ENCODE measurements at regions of chr4 and their contacts with region 1.

Region 1: GRCh38 chr4:108118490-108118889 is 50.2 kb downstream of the LEF1 start:
- DNase-seq: peak; percentile 20
- H3K4me3 ChIP-seq: no peak overlapping the region
- H3K27ac ChIP-seq: peak overlapping the region; percentile 0
- H3K4me1 ChIP-seq: peaks cover 77% of the 10 kb centered on the region
- CTCF ChIP-seq: no peak

Region 2: GRCh38 chr4:107606700-107607099 is 511.8 kb before region 1 on chr4:
- CTCF ChIA-PET with region 1: no interaction called
- POLR2A ChIA-PET with region 1: no interaction called
- intact Hi-C with region 1: no loop called
- DNase-seq: no peak
- H3K4me3 ChIP-seq: no peak overlapping the region
- H3K27ac ChIP-seq: no peak overlapping the region
- H3K4me1 ChIP-seq: no peaks in the 10 kb centered on the region
- CTCF ChIP-seq: no peak

Region 3: GRCh38 chr4:107699466-107700206 is 418.9 kb before region 1 on chr4:
- CTCF ChIA-PET with region 1: no interaction called
- POLR2A ChIA-PET with region 1: no interaction called
- intact Hi-C with region 1: no loop called
- DNase-seq: no peak
- H3K4me3 ChIP-seq: no peak overlapping the region
- H3K27ac ChIP-seq: no peak overlapping the region
- H3K4me1 ChIP-seq: no peaks in the 10 kb centered on the region
- CTCF ChIP-seq: no peak

Region 4: GRCh38 chr4:108107729-108108382 is 10.6 kb before region 1 on chr4:
- CTCF ChIA-PET with region 1: interaction called, 5 read pairs
- POLR2A ChIA-PET with region 1: interaction called, 97 read pairs
- intact Hi-C with region 1: no loop called
- DNase-seq: no peak
- H3K4me3 ChIP-seq: no peak overlapping the region
- H3K27ac ChIP-seq: no peak overlapping the region
- H3K4me1 ChIP-seq: peaks cover 42% of the 10 kb centered on the region
- CTCF ChIP-seq: no peak

Region 5: GRCh38 chr4:108130954-108131353 is 12.5 kb after region 1 on chr4:
- CTCF ChIA-PET with region 1: interaction called, 3 read pairs
- POLR2A ChIA-PET with region 1: interaction called, 97 read pairs
- intact Hi-C with region 1: no loop called
- DNase-seq: no peak
- H3K4me3 ChIP-seq: no peak overlapping the region
- H3K27ac ChIP-seq: no peak overlapping the region
- H3K4me1 ChIP-seq: peaks cover 5% of the 10 kb centered on the region
- CTCF ChIP-seq: peak; percentile 62

Region 6: GRCh38 chr4:108396900-108397497 is 278.5 kb after region 1 on chr4:
- CTCF ChIA-PET with region 1: no interaction called
- POLR2A ChIA-PET with region 1: no interaction called
- intact Hi-C with region 1: no loop called
- DNase-seq: no peak
- H3K4me3 ChIP-seq: no peak overlapping the region
- H3K27ac ChIP-seq: no peak overlapping the region
- H3K4me1 ChIP-seq: no peaks in the 10 kb centered on the region
- CTCF ChIP-seq: no peak

Measured in OCI-LY7 (cell line).